Cardiac septum (tissue), 1 donor: ENCODE measurements at regions of chr10 and their contacts with region 1.

Region 1: DNA sequence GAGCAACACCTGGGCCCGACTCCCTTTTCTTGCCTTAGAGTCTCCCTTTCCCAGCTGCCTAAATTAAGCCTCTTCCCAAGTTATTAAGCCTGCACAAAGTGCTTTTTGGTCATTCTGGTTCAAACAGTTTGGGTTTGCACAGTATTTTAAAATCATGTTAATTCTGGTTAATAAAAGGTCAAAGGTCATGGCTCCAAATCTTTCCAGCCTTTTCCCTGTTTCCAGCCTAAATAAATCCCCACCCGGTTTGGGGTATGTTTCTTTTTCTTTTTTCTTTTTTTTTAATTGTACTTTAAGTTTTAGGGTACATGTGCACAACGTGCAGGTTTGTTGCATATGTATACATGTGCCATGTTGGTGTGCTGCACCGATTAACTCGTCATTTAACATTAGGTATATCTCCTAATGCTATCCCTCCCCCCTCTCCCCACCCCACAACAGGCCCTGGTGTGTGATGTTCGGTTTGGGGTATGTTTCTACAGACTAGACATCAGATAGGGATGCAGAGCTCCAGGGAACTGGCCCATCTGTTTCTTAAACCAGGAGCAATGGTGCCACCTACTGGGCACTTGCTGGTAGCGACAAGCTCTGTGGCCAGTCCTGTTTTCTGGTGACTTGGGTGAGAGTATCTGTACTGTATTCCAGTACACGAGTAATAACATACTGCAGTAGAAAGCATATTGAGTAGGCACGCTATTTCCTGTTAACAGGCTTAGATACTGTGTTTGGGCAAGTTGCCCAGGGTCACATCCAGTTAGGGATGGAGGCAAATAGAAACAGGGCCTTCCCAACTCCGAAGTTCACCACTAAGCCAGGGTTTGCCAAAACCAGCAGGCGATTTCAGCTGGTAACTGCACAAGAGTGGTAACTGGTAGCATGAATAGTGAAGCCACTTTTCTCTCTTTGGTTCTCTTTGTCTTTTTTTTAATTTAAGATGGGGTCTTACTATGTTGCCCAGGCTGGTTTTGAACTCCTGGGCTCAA is 60.6 kb upstream of the TRIM8 start:
- DNase-seq: peak; percentile 90

Region 2: GRCh38 chr10:102394079-102394800 is 189.5 kb before region 1 on chr10:
- intact Hi-C with region 1: loop called (anchors 5 kb)
- DNase-seq: peak; percentile 99

Region 3: DNA sequence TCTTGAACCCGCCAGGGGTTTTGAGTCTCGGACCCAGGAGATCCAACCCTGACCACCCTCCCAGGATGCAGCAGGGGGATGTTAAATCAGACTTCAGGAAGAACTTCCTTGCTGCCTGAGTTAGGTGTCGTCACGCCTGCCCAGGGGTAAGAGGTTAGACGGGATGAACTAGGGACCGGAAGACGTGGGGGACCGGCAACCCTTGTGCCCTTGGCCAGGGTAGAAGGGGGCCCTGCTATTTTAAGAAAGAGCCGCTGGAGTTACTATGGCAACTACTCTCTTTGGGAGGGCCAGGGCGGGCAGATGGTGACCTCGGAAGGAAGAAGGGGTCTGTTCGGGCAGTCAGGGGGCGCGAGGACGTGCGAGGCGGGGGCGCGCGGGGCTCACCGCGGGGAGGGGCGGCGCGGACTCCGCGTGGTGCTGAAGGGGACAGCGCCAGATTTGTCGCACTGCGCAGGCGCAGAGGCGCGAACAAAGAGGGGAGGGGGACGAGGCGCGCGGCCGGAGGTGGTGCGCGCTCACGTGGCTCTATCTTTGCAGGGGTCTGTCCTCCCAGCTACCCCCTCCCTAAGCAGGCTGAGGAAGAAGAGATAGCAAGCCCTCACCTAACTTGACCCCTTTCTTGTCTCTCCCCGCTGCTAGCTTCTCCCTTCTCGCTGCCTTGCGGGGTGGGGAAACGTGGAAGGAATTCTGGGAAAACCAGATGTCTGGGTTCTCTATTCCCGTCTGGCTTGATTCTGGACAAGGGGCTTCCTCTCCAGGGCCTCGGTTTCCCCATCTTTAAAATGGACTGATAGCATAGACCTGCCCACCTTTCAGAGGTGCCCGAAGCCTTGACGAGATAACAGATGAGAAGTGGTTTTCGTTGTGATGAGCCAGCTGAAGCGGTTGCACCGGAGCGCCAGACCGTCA is 164.2 kb before region 1 on chr10:
- intact Hi-C with region 1: no loop called
- DNase-seq: peak; percentile 89

Region 4: DNA sequence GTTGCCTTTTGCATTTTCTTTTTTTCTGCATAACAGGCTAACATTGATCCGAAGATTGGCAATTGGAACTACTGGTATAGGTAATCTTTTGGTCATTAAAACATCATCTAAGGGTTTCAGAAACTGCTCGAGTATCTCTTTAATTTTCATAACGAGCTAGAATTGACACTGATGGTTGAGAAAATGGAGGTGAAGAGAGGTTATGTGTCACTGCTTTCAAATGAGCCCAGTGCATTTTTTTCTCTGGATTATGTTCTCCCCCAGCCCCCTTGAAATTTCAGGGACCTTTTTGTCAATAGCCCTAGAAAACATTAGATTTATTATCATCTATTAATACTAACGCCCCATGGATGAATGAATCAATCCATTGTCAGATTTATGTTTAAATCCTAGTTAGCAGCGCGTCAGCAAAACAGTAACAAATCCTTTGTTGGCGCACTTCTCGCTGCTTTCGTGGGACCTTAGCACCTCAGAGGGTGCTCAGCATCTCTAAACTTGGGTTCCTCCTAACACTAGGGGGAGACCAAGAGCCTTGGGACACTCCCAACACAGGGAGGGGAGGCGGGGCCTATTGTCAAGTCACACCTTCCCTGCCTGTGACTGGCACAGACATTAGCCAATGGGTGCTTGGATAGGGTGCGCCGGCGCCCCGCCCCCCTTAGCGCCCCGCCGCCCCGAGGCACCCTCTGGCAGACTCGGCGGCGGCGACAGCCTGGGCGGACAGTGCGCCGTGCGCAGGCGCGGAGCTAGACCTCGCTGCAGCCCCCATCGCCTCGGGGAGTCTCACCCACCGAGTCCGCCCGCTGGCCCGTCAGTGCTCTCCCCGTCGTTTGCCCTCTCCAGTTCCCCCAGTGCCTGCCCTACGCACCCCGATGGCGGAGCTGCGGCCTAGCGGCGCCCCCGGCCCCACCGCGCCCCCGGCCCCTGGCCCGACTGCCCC is 80.2 kb before region 1 on chr10 and contains the start of gene SUFU:
- intact Hi-C with region 1: loop called (anchors 2 kb)
- DNase-seq: peak; percentile 99
- total RNA-seq, gene SUFU: 6.1 TPM

Region 5: GRCh38 chr10:102604379-102604960 is 20.7 kb after region 1 on chr10:
- intact Hi-C with region 1: no loop called
- DNase-seq: no peak

Region 6: DNA sequence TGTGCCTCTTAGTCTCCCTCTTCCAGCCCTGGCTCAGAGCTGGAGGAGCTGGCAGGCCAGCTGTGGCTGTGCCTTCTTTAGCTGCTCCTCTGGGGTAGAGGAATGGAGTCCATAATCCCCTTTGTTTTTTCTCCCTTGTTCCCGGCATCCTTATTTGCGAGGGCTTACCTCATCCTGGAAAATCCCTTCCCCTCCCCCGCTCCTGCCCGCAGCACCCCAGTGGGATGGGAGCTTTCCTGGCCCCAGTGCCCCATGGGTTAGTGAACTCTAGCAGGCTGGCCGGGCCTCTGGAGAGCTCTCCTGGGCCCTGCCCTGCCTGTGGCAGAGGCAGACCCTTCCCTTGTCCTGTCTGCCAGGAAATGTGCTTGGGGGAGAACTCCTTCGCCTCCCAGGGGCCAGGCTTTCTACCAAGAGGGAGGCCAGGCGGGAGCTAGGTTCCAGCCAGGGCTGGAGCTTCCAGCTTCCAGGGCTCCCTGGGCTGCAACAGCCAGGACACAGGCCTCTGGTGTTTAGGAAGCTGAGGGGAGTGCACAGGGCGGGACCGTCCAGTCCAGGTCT is 44.1 kb after region 1 on chr10:
- intact Hi-C with region 1: no loop called
- DNase-seq: peak; percentile 78